Common myeloid progenitor, CD34-positive (primary cell): ENCODE measurements at regions of chr15 and their contacts with region 1.

Region 1: GRCh38 chr15:70799667-70800450 is 36.5 kb upstream of the UACA start:
- DNase-seq: no peak
- H3K4me3 ChIP-seq: no peak overlapping the region
- H3K27ac ChIP-seq: no peak overlapping the region
- H3K4me1 ChIP-seq: no peaks in the 10 kb centered on the region
- H3K27me3 ChIP-seq: peaks cover 0 to 4% (median 0%) of the 10 kb centered on the region in 5 experiments

Region 2: GRCh38 chr15:70810916-70811578 is 11.2 kb after region 1 on chr15:
- CTCF ChIA-PET with region 1: interaction called, 22 read pairs
- POLR2A ChIA-PET with region 1: no interaction called
- DNase-seq: no peak
- H3K4me3 ChIP-seq: no peak overlapping the region
- H3K27ac ChIP-seq: no peak overlapping the region
- H3K4me1 ChIP-seq: peaks cover 0 to 12% (median 9%) of the 10 kb centered on the region in 4 experiments
- H3K27me3 ChIP-seq: peaks cover 0 to 11% (median 0%) of the 10 kb centered on the region in 5 experiments